CD4-positive, alpha-beta T cell (primary cell): ENCODE measurements at regions of chr17 and their contacts with region 1.

Region 1: GRCh38 chr17:63425482-63425881 is 20.6 kb downstream of the CYB561 start:
- DNase-seq: peak; percentile 55 to 87 (median 62)
- ATAC-seq: peak; percentile 90
- H3K4me3 ChIP-seq: no peak overlapping the region
- H3K4me3 Mint-ChIP-seq: no peak overlapping the region
- H3K27ac ChIP-seq: no peak overlapping the region
- H3K27ac Mint-ChIP-seq: no peak overlapping the region
- H3K4me1 ChIP-seq: peaks cover 51% of the 10 kb centered on the region
- H3K4me1 Mint-ChIP-seq: peaks cover 38% of the 10 kb centered on the region
- H3K27me3 ChIP-seq: no peaks in the 10 kb centered on the region
- H3K27me3 Mint-ChIP-seq: no peaks in the 10 kb centered on the region
- CTCF ChIP-seq: peak; percentile 97

Region 2: DNA sequence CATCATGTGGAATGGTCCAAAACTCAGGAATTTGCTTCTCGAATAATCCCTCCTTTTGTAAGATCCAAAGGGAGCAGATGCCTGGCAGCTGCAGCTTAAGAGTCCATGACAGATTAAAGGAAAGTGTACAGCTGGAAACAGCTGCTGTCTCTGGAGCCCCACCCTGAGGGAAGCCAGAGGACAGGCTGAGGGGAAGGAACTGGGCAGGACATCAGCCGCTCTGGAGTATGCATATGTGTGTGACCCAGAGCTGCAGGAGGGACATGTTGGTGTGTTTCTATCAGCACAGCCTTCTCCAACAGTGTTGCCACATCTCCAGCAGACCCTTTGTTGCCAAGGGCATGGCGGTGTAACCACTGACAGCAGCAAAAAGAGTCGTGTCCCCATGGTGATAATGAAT is 25.6 kb before region 1 on chr17:
- CTCF ChIA-PET with region 1: no interaction called
- POLR2A ChIA-PET with region 1: no interaction called
- intact Hi-C with region 1: no loop called
- DNase-seq: no peak
- ATAC-seq: no peak
- H3K4me3 ChIP-seq: no peak overlapping the region
- H3K4me3 Mint-ChIP-seq: no peak overlapping the region
- H3K27ac ChIP-seq: no peak overlapping the region
- H3K27ac Mint-ChIP-seq: no peak overlapping the region
- H3K4me1 ChIP-seq: no peaks in the 10 kb centered on the region
- H3K4me1 Mint-ChIP-seq: no peaks in the 10 kb centered on the region
- H3K27me3 ChIP-seq: no peaks in the 10 kb centered on the region
- H3K27me3 Mint-ChIP-seq: no peaks in the 10 kb centered on the region
- CTCF ChIP-seq: no peak

Region 3: GRCh38 chr17:63445979-63446691 is 20.7 kb after region 1 on chr17 and contains the start of gene CYB561:
- CTCF ChIA-PET with region 1: interaction called, 23 read pairs
- POLR2A ChIA-PET with region 1: interaction called, 8 read pairs
- intact Hi-C with region 1: no loop called
- DNase-seq: peak; percentile 33 to 90 (median 64)
- ATAC-seq: peak; percentile 71
- H3K4me3 ChIP-seq: peak within 1 kb of the TSS; percentile 71
- H3K4me3 Mint-ChIP-seq: peak within 1 kb of the TSS; percentile 90
- H3K27ac ChIP-seq: peak within 1 kb of the TSS; percentile 82 to 96
- H3K27ac Mint-ChIP-seq: peak within 1 kb of the TSS; percentile 85
- H3K4me1 ChIP-seq: peaks cover 52% of the 10 kb centered on the region
- H3K4me1 Mint-ChIP-seq: peaks cover 35% of the 10 kb centered on the region
- H3K27me3 ChIP-seq: no peaks in the 10 kb centered on the region
- H3K27me3 Mint-ChIP-seq: peaks cover 6% of the 10 kb centered on the region
- CTCF ChIP-seq: peak; percentile 29
- total RNA-seq, gene CYB561: 17.4 to 18.1 TPM

Region 4: GRCh38 chr17:63611354-63611753 is 185.9 kb after region 1 on chr17:
- CTCF ChIA-PET with region 1: interaction called, 46 read pairs
- POLR2A ChIA-PET with region 1: interaction called, 15 read pairs
- intact Hi-C with region 1: loop called (anchors 1 kb)
- DNase-seq: peak in 5 of 14 experiments; percentile 5 to 62 (median 29)
- ATAC-seq: peak; percentile 27
- H3K4me3 ChIP-seq: no peak overlapping the region
- H3K4me3 Mint-ChIP-seq: peak overlapping the region; percentile 42
- H3K27ac ChIP-seq: peak overlapping the region in 1 of 2 donors; percentile 70
- H3K27ac Mint-ChIP-seq: peak overlapping the region; percentile 88
- H3K4me1 ChIP-seq: peaks cover 30% of the 10 kb centered on the region
- H3K4me1 Mint-ChIP-seq: peaks cover 31% of the 10 kb centered on the region
- H3K27me3 ChIP-seq: no peaks in the 10 kb centered on the region
- H3K27me3 Mint-ChIP-seq: no peaks in the 10 kb centered on the region
- CTCF ChIP-seq: no peak

Region 5: GRCh38 chr17:63714547-63715277 is 289.2 kb after region 1 on chr17:
- CTCF ChIA-PET with region 1: interaction called, 13 read pairs
- POLR2A ChIA-PET with region 1: no interaction called
- intact Hi-C with region 1: loop called (anchors 2 kb)
- DNase-seq: no peak
- ATAC-seq: no peak
- H3K4me3 ChIP-seq: no peak overlapping the region
- H3K4me3 Mint-ChIP-seq: no peak overlapping the region
- H3K27ac ChIP-seq: no peak overlapping the region
- H3K27ac Mint-ChIP-seq: no peak overlapping the region
- H3K4me1 ChIP-seq: peaks cover 13% of the 10 kb centered on the region
- H3K4me1 Mint-ChIP-seq: peaks cover 12% of the 10 kb centered on the region
- H3K27me3 ChIP-seq: no peaks in the 10 kb centered on the region
- H3K27me3 Mint-ChIP-seq: no peaks in the 10 kb centered on the region
- CTCF ChIP-seq: no peak